H1 (cell line): ENCODE measurements at regions of chr5 and their contacts with region 1.

Region 1: GRCh38 chr5:72108202-72109061 is 1.2 kb downstream of the MAP1B start:
- DNase-seq: peak in 1 of 2 experiments; percentile 86
- H3K4me3 ChIP-seq: peak overlapping the region; percentile 84 to 98 (median 94)
- H3K27ac ChIP-seq: peak overlapping the region; percentile 50; the same call in 1 of the 2 replicates
- H3K4me1 ChIP-seq: peaks cover 3 to 12% (median 6%) of the 10 kb centered on the region in 4 experiments; a peak in 6 of 7 replicates
- H3K27me3 ChIP-seq: no peaks in the 10 kb centered on the region
- CTCF ChIP-seq: no peak
- EP300 ChIP-seq: peak in 1 of 2 experiments; percentile 41; a peak in 1 of 3 replicates
- POLR2A ChIP-seq: peak in 1 of 2 experiments; percentile 64; a peak in 1 of 3 replicates
- RAD21 ChIP-seq: peak; percentile 9 to 24; a peak in 1 of 4 replicates

Region 2: DNA sequence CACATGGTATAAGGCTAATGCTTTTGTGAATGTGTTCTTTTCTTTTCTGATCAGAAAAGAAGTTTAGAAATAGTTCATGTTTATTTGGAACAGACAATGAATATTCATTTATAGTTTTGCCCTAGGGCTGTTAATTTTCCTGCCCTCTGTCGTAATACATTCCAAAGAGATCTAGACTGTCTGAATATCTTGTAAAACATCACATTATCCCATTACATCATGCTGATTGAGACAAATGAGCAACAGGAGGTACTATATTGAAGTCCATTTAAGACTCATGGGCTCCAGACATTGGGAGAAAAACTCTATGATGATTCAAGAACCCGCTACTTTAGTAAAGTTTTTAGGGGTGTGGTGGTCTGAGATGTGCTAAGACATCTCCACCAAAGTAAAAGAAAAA is 122.3 kb before region 1 on chr5:
- CTCF ChIA-PET with region 1: no interaction called
- POLR2A ChIA-PET with region 1: no interaction called
- DNase-seq: no peak
- H3K4me3 ChIP-seq: no peak overlapping the region
- H3K27ac ChIP-seq: no peak overlapping the region
- H3K4me1 ChIP-seq: no peaks in the 10 kb centered on the region
- H3K27me3 ChIP-seq: no peaks in the 10 kb centered on the region
- CTCF ChIP-seq: no peak
- EP300 ChIP-seq: no peak
- POLR2A ChIP-seq: no peak
- RAD21 ChIP-seq: no peak

Region 3: DNA sequence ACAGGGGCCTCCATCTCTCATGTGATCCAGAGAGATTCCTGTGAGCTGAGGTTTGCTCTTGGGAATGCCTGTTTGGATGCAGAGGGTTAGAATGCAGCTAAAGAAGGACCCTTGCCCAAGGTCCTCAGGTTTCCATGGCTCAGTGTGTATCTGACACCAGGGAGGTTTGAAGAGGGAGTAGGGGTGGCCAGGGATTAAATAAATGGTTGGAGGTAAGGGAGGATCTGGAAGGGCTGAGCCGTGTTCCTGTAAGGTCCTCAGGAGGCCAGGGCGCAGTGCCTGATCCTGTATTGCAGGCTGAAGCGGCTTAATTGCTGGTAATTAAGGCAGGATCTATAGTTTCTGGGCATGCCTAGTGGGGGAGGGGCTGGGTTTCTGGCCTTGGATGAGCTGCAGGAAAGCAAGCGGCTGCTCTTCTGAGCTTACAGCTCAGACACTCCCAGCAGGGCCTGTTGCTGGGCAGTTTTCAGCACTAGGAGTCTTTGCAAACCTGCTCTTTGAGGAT is 42.6 kb before region 1 on chr5:
- CTCF ChIA-PET with region 1: interaction called, 4 read pairs
- POLR2A ChIA-PET with region 1: interaction called, 14 read pairs
- DNase-seq: peak; percentile 78 to 81
- H3K4me3 ChIP-seq: peak overlapping the region in 3 of 4 experiments; percentile 16 to 32 (median 30); a peak in 4 of 8 replicates
- H3K27ac ChIP-seq: peak overlapping the region; percentile 85; the same call in 1 of the 2 replicates
- H3K4me1 ChIP-seq: peaks cover 12 to 25% (median 20%) of the 10 kb centered on the region in 4 experiments
- H3K27me3 ChIP-seq: no peaks in the 10 kb centered on the region
- CTCF ChIP-seq: peak in 1 of 3 experiments; percentile 0; a peak in 1 of 4 replicates
- EP300 ChIP-seq: peak in 1 of 2 experiments; percentile 20; a peak in 1 of 3 replicates
- POLR2A ChIP-seq: no peak; a peak in 1 of 3 replicates
- RAD21 ChIP-seq: 0 out of 4 replicates have a peak, but pooled peaks of 1 of the 2 experiments have one; percentile 5

Region 4: DNA sequence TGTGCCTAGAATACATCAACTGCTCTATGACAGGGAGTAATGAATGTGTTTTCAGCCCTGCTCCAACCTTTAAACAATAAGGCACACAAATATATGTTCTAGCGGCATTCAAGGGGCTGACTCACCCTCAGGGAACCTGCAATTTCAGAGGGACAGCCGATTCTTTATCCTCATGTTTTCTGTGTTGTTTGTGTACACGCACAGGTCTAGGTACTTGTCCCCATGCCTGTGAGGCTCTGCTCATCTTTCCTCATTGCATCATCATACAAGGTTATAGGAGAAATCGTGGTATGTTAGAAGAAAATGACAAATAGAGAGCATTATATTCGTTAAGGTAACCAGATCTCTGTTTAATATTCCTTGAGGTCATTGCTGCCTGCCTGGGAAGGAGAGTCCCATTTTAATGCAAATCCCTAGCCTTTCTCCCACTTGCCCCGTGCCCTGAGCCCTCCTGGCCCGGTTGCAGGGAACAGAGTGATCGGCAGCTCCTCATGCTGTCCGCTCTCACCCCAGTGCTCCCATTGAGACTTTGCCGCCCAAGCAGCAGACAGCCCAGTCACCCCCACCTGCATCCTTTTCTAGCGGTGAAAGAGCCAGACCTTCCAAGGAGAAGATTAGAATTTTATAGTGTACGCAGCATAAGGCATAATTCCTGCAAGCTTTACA is 13.5 kb after region 1 on chr5:
- CTCF ChIA-PET with region 1: interaction called, 4 read pairs
- POLR2A ChIA-PET with region 1: interaction called, 72 read pairs
- DNase-seq: no peak
- H3K4me3 ChIP-seq: peak overlapping the region in 1 of 4 experiments; percentile 28; a peak in 1 of 8 replicates
- H3K27ac ChIP-seq: peak overlapping the region; percentile 40; the same call in 1 of the 2 replicates
- H3K4me1 ChIP-seq: peaks cover 11 to 24% (median 20%) of the 10 kb centered on the region in 4 experiments
- H3K27me3 ChIP-seq: no peaks in the 10 kb centered on the region
- CTCF ChIP-seq: no peak
- EP300 ChIP-seq: no peak
- POLR2A ChIP-seq: no peak
- RAD21 ChIP-seq: no peak